ENCODE measurements at regions of chr7 and their contacts with region 1.

Region 1: DNA sequence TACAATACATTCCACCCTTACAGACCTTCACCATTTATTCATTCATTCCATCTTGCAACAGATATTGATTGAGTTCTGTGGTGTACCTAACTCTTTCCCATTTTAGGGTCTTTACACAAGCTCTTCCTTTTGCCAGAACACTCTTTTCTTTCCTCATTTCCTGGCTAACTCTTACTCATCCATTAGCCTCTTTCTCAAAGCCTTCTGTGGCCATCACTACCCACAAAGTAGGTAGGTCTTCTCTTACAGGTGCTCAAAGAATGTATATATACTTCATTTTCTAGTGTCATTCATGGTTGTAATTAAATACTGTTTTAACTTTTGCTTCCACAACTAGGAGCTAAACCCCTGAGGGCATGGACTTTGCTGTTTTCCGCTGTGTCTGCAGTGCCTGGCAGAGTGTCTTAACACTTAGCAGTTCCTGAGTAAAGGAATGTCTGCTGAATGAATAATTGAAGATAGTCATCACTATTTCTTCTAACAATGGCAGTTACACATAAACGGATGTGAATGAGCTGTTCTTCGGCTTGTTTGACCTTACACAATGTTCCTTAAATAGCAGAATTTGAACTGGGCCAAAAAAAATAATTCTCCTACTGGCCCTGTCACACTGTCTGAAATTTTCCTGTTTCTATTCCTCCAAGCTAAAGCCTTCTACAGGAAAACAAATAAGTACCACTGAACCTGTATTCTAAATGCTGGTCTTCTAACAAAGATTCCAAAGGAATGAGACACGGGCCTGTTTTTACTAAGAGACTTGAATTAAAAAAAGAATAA is 15.1 kb downstream of the BCAP29 start:
- DNase-seq: no peak
- ATAC-seq: peak; percentile 88
- H3K4me3 ChIP-seq: peak overlapping the region in 1 of 2 donors; percentile 15
- H3K27ac ChIP-seq: peak overlapping the region; percentile 92 to 94
- H3K4me1 ChIP-seq: peaks cover 7 to 15% of the 10 kb centered on the region in 2 donors
- H3K27me3 ChIP-seq: no peaks in the 10 kb centered on the region

Region 2: GRCh38 chr7:106260136-106260561 is 1335.0 kb before region 1 on chr7:
- intact Hi-C with region 1: no loop called
- DNase-seq: no peak
- ATAC-seq: no peak
- H3K4me3 ChIP-seq: no peak overlapping the region
- H3K27ac ChIP-seq: no peak overlapping the region
- H3K4me1 ChIP-seq: no peaks in the 10 kb centered on the region
- H3K27me3 ChIP-seq: no peaks in the 10 kb centered on the region

Region 3: DNA sequence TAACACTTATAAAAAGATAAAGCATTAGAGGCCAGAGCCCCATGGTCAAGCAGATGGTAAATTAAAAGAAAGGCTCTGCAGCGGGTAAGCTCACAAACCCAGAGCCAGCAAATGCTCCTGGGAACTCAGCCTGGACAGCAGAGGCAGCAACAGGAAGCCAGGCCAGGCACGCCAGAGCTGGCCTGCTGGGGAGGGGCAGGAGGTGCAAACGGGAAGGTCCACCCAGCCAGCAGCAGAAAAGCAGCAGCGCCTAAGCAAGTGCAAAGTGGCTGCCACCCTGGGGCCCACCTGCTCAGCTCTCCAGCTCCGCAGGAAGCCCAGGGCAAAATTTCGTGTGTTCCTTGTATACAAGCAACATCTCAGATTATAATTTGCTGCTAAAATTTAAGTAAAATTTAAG is 208.0 kb before region 1 on chr7:
- intact Hi-C with region 1: loop called in 1 of 2 experiments (anchors 10 kb)
- DNase-seq: peak; percentile 82 to 83
- ATAC-seq: peak; percentile 91
- H3K4me3 ChIP-seq: no peak overlapping the region
- H3K27ac ChIP-seq: peak overlapping the region; percentile 78 to 92
- H3K4me1 ChIP-seq: peaks cover 0 to 6% of the 10 kb centered on the region in 2 donors
- H3K27me3 ChIP-seq: no peaks in the 10 kb centered on the region

Region 4: DNA sequence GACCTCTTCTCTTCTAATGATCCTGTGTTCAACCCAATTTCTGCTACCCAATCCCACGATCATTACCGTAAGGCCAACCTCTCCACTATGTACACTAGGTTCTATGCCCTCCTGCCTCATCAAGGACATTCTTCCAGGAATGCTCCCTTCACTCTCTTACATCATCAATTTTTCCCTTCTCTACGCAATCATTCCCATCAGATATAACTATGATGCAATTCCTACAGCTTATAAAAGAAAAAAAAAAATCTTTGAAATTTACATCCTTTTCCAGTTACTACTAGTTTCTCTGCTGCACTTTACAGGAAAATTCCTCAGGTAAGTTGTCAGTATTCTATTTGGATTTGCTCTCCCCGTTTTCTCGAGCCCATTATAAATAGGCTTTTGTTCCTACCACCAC is 156.1 kb before region 1 on chr7:
- intact Hi-C with region 1: no loop called
- DNase-seq: no peak
- ATAC-seq: no peak
- H3K4me3 ChIP-seq: no peak overlapping the region
- H3K27ac ChIP-seq: no peak overlapping the region
- H3K4me1 ChIP-seq: peaks cover 0 to 2% of the 10 kb centered on the region in 2 donors
- H3K27me3 ChIP-seq: no peaks in the 10 kb centered on the region

Region 5: DNA sequence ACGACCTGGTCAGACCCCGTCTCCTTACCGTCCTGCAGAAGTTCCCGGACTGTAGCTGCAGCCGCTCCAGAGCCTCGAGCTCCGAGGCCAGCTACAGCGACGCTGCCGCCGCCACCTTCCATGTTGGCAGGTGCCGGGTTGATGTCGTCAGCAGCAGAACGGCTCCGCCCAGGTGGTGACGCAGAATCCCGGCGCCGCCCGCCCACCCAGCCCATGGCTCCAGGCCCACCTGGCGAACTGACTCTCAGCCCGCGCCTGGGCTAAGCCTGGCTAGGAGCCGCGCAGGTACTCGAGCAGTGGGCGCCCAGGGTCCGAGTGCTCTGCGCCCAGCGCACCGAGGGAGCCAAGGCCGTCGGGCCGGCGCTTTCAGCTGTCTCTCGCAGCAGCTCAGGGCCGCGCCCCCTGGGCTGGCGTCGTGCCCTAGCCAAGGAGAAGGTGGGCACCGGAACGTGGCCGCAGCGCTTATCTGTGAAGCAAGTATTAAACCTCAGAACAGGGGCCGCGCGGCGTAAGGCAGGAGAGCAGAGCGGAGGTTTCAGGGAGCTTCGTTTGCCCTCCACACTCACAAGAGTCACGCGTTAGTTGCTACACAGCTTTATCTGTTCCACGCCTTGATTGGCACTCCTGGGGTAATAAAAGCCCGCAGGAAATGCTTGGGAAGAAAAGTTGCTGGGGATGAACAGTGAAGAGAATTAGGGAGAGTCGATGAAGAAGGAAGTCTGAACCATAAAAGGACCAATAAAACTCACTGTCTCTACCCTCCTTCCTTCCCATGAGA is 31.2 kb before region 1 on chr7 and contains the starts of genes COG5 and DUS4L:
- intact Hi-C with region 1: loop called in 1 of 2 experiments (anchors 5 kb)
- DNase-seq: peak; percentile 88 to 95
- ATAC-seq: peak; percentile 96
- H3K4me3 ChIP-seq: peak within 1 kb of the TSS; percentile 29 to 81
- H3K27ac ChIP-seq: peak within 1 kb of the TSS; percentile 64 to 69
- H3K4me1 ChIP-seq: peaks cover 0 to 3% of the 10 kb centered on the region in 2 donors
- H3K27me3 ChIP-seq: no peaks in the 10 kb centered on the region
- total RNA-seq, gene COG5: 55.9 to 58.2 TPM
- total RNA-seq, gene DUS4L: 6.4 to 6.8 TPM

Region 6: DNA sequence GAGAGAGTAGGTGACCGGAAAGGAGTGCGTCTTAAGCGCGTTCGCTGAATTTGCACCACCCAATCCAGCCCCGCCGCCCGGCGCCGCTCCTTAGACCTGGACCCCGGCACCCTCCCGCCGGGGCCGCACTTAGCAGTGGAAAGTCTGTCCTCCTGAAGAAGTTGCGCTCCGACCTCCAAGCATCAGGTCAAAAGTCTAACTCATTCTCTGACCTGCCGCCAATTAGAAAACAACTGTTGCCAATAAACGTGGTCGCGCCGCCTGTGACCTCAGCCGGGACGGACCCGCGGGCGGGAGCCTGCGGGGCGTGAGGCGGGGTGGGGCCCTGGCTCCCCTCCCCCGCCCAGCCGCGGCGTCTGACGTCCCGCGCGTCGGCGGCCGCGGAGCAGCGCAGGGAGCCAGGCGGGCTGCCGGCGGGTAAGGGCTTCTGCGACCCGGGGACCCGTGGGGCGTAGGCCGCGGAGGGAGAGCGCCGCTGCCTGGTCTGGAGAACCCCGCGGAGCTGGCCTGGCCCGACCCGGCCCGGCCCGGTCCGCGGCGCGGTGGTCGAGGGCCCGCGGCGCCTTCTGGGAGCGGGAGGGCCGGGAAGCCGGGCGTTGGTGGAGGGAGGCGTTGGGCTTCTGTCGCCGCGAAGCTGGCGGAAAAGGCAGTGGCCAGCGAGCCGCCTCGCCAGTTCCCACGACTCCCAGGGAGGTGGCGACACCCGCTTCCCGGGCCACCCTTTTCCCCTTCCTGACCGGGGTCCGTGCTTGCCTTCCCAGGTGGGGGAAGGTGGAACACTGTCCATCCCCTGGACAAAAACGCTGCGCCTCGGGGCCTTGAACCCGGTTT is 15.0 kb before region 1 on chr7 and contains the start of gene BCAP29:
- intact Hi-C with region 1: loop called in 1 of 2 experiments (anchors 2 kb)
- DNase-seq: peak; percentile 83 to 93
- ATAC-seq: peak; percentile 92
- H3K4me3 ChIP-seq: peak within 1 kb of the TSS; percentile 71 to 99
- H3K27ac ChIP-seq: peak within 1 kb of the TSS; percentile 65 to 100
- H3K4me1 ChIP-seq: peaks cover 0 to 3% of the 10 kb centered on the region in 2 donors
- H3K27me3 ChIP-seq: no peaks in the 10 kb centered on the region
- total RNA-seq, gene BCAP29: 96.1 to 139 TPM

Region 7: DNA sequence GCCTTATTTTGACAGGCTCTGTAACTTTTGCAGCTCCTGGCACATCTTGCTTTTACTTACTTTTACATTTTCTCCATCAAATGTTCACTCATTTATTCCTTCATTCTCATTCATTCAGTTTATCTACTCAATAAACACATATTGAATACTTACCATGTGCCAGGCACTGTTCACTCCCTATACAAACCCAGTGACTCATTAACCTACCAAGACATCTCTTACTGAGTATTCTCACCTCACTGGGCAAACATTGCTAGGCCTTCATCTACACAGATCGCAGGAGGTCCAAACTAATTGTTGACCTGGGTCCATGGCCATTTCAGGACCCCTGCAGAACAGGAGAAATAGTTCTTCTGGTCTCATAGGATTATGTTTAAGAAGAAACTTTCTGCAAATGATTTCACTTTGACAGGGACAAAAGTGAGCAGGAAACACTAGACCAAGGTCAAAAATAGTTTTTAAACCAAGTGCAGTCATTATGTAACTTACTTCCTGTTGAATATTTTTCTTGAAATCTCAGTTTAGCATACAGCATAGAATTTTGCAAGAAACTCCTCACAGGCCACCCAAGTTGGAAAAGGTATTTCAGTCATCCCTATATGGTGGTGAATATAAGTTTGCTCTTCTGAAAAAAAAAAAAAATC is 83.1 kb after region 1 on chr7:
- intact Hi-C with region 1: no loop called
- DNase-seq: no peak
- ATAC-seq: no peak
- H3K4me3 ChIP-seq: no peak overlapping the region
- H3K27ac ChIP-seq: no peak overlapping the region
- H3K4me1 ChIP-seq: no peaks in the 10 kb centered on the region
- H3K27me3 ChIP-seq: no peaks in the 10 kb centered on the region